ENCODE measurements at regions of chr15 and their contacts with region 1.

Region 1: GRCh38 chr15:66440501-66440900 is 53.8 kb downstream of the MAP2K1 start:
- DNase-seq: no peak
- H3K4me3 ChIP-seq: no peak overlapping the region
- H3K27ac ChIP-seq: no peak overlapping the region
- H3K4me1 ChIP-seq: no peaks in the 10 kb centered on the region
- H3K27me3 ChIP-seq: no peaks in the 10 kb centered on the region
- CTCF ChIP-seq: no peak

Region 2: DNA sequence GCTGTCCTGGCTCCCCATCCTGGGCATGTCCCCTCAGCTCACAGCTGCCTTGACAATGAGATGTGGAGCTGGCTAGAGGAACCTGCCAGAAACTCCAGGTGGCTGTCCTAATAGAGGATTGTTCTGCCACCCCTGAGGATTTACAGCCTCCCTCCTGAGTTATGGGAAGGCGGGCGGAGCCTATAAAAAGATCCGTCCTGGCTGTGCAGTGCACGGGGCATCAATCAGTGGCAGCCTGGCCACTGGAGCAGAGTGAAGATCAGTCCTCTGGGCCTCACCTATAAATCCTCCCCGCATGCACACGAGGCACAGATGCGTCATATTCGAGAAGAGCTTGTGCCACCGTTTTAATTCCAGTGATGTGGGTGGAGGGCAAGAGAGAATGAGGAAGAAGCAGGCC is 276.9 kb before region 1 on chr15:
- CTCF ChIA-PET with region 1: no interaction called
- POLR2A ChIA-PET with region 1: no interaction called
- intact Hi-C with region 1: no loop called
- DNase-seq: no peak
- H3K4me3 ChIP-seq: no peak overlapping the region
- H3K27ac ChIP-seq: no peak overlapping the region
- H3K4me1 ChIP-seq: no peaks in the 10 kb centered on the region
- H3K27me3 ChIP-seq: peaks cover 12% of the 10 kb centered on the region
- CTCF ChIP-seq: no peak

Region 3: GRCh38 chr15:66413579-66413978 is 26.9 kb before region 1 on chr15:
- CTCF ChIA-PET with region 1: no interaction called
- POLR2A ChIA-PET with region 1: interaction called, 19 read pairs
- intact Hi-C with region 1: no loop called
- DNase-seq: no peak
- H3K4me3 ChIP-seq: no peak overlapping the region
- H3K27ac ChIP-seq: no peak overlapping the region
- H3K4me1 ChIP-seq: peaks cover 36% of the 10 kb centered on the region
- H3K27me3 ChIP-seq: no peaks in the 10 kb centered on the region
- CTCF ChIP-seq: no peak

Region 4: DNA sequence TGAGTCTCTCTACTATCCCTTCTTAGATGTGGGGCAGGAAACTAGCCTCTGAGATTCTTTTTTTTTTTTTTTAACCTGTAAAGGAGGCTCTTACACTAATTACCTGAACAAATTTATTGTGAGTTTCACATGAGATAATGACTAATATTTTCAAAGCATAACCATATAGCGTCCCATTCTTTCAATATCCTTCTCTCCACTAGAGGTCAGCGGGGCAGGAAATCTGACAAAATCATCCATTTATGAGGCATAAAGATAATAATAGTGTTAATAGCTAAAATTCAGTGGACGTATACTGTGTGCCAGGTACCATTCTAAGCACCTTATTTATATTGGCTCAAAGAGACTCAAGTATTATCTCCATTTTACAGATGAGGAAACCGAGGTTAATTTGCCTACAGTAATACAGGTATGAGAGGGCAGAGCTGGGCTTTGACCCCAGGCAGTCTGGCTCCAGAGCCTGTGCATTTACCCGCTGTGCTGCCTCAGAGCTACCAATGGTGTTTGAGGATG is 245.2 kb after region 1 on chr15:
- CTCF ChIA-PET with region 1: no interaction called
- POLR2A ChIA-PET with region 1: no interaction called
- intact Hi-C with region 1: no loop called
- DNase-seq: no peak
- H3K4me3 ChIP-seq: no peak overlapping the region
- H3K27ac ChIP-seq: no peak overlapping the region
- H3K4me1 ChIP-seq: no peaks in the 10 kb centered on the region
- H3K27me3 ChIP-seq: no peaks in the 10 kb centered on the region
- CTCF ChIP-seq: peak; percentile 48

Measured in A673 (cell line).